Calu3 (cell line): ENCODE measurements at regions of chr5 and their contacts with region 1.

Region 1: GRCh38 chr5:95283761-95284415 is 1.0 kb downstream of the MCTP1 start:
- DNase-seq: peak; percentile 78
- H3K4me3 Mint-ChIP-seq: peak overlapping the region; percentile 80
- H3K27ac Mint-ChIP-seq: no peak overlapping the region
- H3K4me1 Mint-ChIP-seq: peaks cover 8% of the 10 kb centered on the region
- H3K27me3 Mint-ChIP-seq: peaks cover 80% of the 10 kb centered on the region
- CTCF ChIP-seq: peak; percentile 76

Region 2: DNA sequence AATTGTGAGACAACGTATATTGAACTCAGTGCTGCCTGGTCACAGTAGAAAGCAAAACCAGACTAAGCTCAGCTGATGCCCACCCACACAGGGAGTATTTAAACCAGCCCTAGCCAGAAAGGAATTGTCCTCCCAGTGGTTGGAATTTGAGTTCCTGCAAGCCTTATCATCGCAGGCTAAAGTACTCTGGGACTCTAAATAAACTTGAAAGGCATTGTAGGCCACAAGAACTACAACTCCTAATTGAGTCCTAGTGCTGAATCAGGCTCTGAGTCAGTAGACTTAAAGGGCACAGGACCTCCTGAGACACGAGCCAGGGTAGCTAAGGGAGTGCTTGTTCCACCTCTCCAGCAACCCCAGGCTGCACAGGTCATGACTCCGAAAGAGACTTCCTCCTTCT is 170.4 kb before region 1 on chr5:
- CTCF ChIA-PET with region 1: no interaction called
- intact Hi-C with region 1: no loop called
- DNase-seq: no peak
- H3K4me3 Mint-ChIP-seq: no peak overlapping the region
- H3K27ac Mint-ChIP-seq: no peak overlapping the region
- H3K4me1 Mint-ChIP-seq: no peaks in the 10 kb centered on the region
- H3K27me3 Mint-ChIP-seq: no peaks in the 10 kb centered on the region
- CTCF ChIP-seq: no peak

Region 3: GRCh38 chr5:95235439-95235982 is 48.4 kb before region 1 on chr5:
- CTCF ChIA-PET with region 1: no interaction called
- intact Hi-C with region 1: no loop called
- DNase-seq: no peak
- H3K4me3 Mint-ChIP-seq: no peak overlapping the region
- H3K27ac Mint-ChIP-seq: no peak overlapping the region
- H3K4me1 Mint-ChIP-seq: peaks cover 9% of the 10 kb centered on the region
- H3K27me3 Mint-ChIP-seq: peaks cover 13% of the 10 kb centered on the region
- CTCF ChIP-seq: no peak

Region 4: DNA sequence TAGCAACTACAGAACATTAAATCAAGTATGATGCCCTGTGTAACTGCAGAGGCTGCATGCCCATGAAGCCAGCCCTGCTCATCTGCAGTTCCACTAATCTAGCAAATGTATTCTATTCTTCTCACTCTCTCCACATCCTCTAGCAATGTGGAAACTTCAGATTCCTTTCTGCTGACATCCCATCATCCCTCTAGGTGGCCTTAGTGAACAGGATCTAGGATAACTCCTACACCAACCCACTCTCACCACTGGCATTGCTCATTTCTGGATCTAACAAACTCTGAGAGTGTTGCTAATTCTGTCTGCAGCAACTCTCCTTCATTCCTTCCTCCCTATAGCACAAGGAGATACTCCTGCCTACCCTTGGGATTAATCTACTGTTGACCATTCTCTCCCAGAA is 188.1 kb after region 1 on chr5:
- CTCF ChIA-PET with region 1: no interaction called
- intact Hi-C with region 1: loop called (anchors 10 kb)
- DNase-seq: no peak
- H3K4me3 Mint-ChIP-seq: no peak overlapping the region
- H3K27ac Mint-ChIP-seq: no peak overlapping the region
- H3K4me1 Mint-ChIP-seq: peaks cover 12% of the 10 kb centered on the region
- H3K27me3 Mint-ChIP-seq: no peaks in the 10 kb centered on the region
- CTCF ChIP-seq: no peak